Left cardiac atrium (tissue), 4 donors: ENCODE measurements at regions of chr22 and their contacts with region 1.

Region 1: GRCh38 chr22:36454916-36455570 is 26.4 kb downstream of the TXN2 start:
- DNase-seq: peak; percentile 94
- ATAC-seq: peak; percentile 89 to 92

Region 2: GRCh38 chr22:36387752-36388518 is 67.1 kb before region 1 on chr22 and contains the start of gene MYH9:
- intact Hi-C with region 1: loop called (anchors 5 to 10 kb)
- DNase-seq: peak; percentile 100
- ATAC-seq: peak; percentile 94
- total RNA-seq, gene MYH9: 225 to 367 TPM

Region 3: DNA sequence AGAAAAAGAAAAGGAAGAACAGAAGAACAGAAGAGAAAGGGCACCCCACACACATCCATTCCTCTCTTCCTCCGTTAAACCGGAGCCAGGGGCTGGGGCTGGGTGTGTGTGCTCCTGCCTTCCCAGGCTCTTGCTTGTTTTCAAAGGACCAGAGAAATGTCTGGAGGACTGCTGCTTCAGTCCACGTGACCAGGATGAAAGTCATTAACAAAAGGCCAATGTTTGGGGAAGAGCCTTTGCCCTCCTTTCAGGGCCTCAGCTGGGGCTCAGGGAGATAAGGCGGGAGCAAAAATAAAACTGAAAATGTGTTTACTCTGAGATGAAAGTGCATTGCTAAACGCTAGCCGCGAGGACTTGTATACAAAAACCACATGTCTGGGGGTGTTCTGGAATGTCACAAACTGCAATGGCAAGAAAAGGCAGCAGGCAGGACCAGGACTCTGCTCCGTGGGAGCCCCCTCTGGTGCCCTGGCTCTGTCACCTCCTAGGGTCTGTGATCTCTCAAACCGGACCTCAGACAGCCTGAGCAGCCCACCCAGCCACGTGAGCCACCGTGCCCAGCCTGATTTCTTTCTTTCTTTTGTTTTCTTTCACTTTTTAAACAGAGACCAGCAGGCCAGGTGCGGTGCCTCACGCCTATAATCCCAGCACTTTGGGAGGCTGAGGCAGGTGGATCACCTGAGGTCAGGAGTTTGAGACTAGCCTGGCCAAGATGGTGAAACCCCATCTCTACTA is 35.7 kb before region 1 on chr22:
- intact Hi-C with region 1: loop called in 1 of 2 experiments (anchors 5 kb)
- DNase-seq: peak; percentile 37
- ATAC-seq: peak; percentile 69 to 79

Region 4: GRCh38 chr22:36528795-36529751 is 74.0 kb after region 1 on chr22 and contains the start of gene EIF3D:
- intact Hi-C with region 1: no loop called
- DNase-seq: peak; percentile 99
- ATAC-seq: peak; percentile 95 to 97
- total RNA-seq, gene EIF3D: 74.8 to 96.3 TPM